Naive thymus-derived CD4-positive, alpha-beta T cell (primary cell): ENCODE measurements at regions of chr16 and their contacts with region 1.

Region 1: DNA sequence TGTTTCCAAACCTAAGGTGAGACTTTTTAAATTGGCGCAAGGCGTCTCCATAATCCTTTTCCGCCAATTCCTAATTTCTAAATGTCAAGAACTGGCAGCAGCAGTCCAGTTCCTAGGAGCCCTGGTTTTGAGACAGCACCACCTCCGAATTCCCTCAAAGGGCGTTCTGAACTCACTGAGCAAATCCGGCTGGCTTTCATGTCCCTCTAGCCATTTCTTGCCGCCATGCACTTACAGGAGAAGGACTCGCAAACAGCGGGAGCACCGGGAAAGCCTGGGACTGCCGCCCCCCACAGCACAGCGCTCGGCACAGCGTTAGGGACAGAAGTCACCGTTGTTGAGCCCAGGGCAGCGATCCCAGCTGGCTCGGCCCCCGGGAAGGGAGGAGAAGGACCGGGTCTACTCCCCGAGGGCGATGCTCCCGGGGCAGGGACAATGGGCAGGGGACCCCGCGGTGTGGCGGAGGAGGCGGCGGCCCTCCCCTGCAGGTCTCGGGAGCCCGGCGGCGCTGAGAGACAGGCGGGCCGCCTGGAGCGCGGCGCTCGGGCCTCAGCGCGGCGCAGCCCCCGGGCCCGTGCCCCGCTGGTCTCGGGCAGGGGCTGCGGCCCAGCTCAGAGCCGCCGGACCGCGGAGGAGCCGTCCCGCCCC is 545 bp downstream of the ARHGAP17 start:
- DNase-seq: peak in 7 of 9 donors; percentile 16 to 39 (median 23)
- ATAC-seq: peak; percentile 26
- H3K4me3 ChIP-seq: peak overlapping the region; percentile 81
- H3K4me3 Mint-ChIP-seq: peak overlapping the region; percentile 83 to 97 (median 94)
- H3K27ac ChIP-seq: peak overlapping the region; percentile 94
- H3K27ac Mint-ChIP-seq: peak overlapping the region; percentile 87 to 98 (median 95)
- H3K4me1 ChIP-seq: peaks cover 24 to 50% of the 10 kb centered on the region in 2 donors
- H3K4me1 Mint-ChIP-seq: peaks cover 59 to 88% (median 76%) of the 10 kb centered on the region in 7 donors
- H3K27me3 ChIP-seq: no peaks in the 10 kb centered on the region
- H3K27me3 Mint-ChIP-seq: no peaks in the 10 kb centered on the region

Region 2: GRCh38 chr16:24972608-24973220 is 41.9 kb before region 1 on chr16:
- CTCF ChIA-PET with region 1: interaction called, 3 read pairs
- POLR2A ChIA-PET with region 1: no interaction called
- intact Hi-C with region 1: loop called (anchors 2 to 5 kb)
- DNase-seq: no peak
- ATAC-seq: no peak
- H3K4me3 ChIP-seq: no peak overlapping the region
- H3K4me3 Mint-ChIP-seq: peak overlapping the region in 1 of 10 donors; percentile 51
- H3K27ac ChIP-seq: no peak overlapping the region
- H3K27ac Mint-ChIP-seq: peak overlapping the region in 6 of 9 donors; percentile 0 to 74 (median 30)
- H3K4me1 ChIP-seq: peaks cover 0 to 12% of the 10 kb centered on the region in 2 donors
- H3K4me1 Mint-ChIP-seq: peaks cover 24 to 52% (median 33%) of the 10 kb centered on the region in 7 donors
- H3K27me3 ChIP-seq: no peaks in the 10 kb centered on the region
- H3K27me3 Mint-ChIP-seq: no peaks in the 10 kb centered on the region

Region 3: GRCh38 chr16:25031441-25032307 is 17.1 kb after region 1 on chr16:
- CTCF ChIA-PET with region 1: interaction called, 6 read pairs
- POLR2A ChIA-PET with region 1: interaction called, 85 read pairs
- intact Hi-C with region 1: loop called (anchors 1 kb)
- DNase-seq: peak; percentile 70 to 95 (median 93)
- ATAC-seq: peak; percentile 100
- H3K4me3 ChIP-seq: peak overlapping the region; percentile 86
- H3K4me3 Mint-ChIP-seq: peak overlapping the region; percentile 84 to 99 (median 96)
- H3K27ac ChIP-seq: peak overlapping the region; percentile 76
- H3K27ac Mint-ChIP-seq: peak overlapping the region; percentile 81 to 98 (median 95)
- H3K4me1 ChIP-seq: peaks cover 13 to 20% of the 10 kb centered on the region in 2 donors
- H3K4me1 Mint-ChIP-seq: peaks cover 24 to 59% (median 36%) of the 10 kb centered on the region in 7 donors
- H3K27me3 ChIP-seq: no peaks in the 10 kb centered on the region
- H3K27me3 Mint-ChIP-seq: no peaks in the 10 kb centered on the region

Region 4: DNA sequence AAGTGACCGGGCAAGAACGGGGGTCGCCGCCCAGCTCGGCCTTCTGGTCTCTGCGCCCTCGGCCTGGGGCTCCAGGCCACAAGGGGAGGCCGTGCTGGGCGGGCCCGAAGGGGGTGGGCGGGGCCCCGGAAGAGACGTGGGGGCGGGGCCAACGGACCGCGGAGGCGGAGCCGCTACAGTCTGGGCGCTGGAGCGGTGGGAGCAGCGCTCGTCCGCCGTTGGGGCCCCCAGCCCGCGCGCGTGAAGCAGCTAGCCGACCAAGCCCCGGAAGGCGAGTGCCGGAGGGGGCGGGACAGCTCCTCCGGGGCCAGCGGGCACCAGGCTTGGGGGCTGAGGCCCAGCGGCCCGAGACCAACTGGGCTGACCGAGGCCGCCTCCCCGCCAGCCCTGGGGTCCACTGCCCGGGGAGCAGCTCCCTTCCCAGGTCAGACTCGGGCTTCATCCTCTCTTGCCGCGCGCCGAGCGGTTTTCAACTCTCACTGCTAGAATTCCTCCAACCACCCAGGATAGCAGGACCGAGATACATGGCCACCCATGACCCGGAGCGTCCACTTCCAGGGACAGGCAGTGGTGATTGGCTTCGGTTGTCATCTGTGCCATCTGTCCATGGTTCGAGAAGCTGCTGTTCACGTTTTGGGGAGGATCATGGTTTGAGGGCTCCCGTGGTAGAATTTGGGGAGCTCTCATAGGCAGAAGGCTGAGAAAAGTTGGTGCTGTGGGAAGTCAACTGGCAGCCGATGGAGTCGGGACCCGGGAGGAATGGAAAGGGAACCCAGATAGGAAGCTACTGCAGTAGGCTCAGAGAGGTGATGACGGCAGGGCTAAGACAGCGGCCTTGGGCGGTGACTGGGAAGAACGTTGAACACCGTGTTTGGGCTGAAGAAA is 52.4 kb after region 1 on chr16:
- CTCF ChIA-PET with region 1: no interaction called
- POLR2A ChIA-PET with region 1: interaction called, 6 read pairs
- intact Hi-C with region 1: loop called in 1 of 2 experiments (anchors 5 kb)
- DNase-seq: peak; percentile 66 to 86 (median 76)
- ATAC-seq: peak; percentile 98
- H3K4me3 ChIP-seq: peak overlapping the region; percentile 85
- H3K4me3 Mint-ChIP-seq: peak overlapping the region; percentile 82 to 99 (median 92)
- H3K27ac ChIP-seq: peak overlapping the region; percentile 76
- H3K27ac Mint-ChIP-seq: peak overlapping the region; percentile 85 to 100 (median 93)
- H3K4me1 ChIP-seq: peaks cover 17 to 33% of the 10 kb centered on the region in 2 donors
- H3K4me1 Mint-ChIP-seq: peaks cover 30 to 72% (median 52%) of the 10 kb centered on the region in 7 donors
- H3K27me3 ChIP-seq: no peaks in the 10 kb centered on the region
- H3K27me3 Mint-ChIP-seq: peaks cover 0 to 2% (median 0%) of the 10 kb centered on the region in 5 donors